Body of pancreas (tissue), 4 donors: ENCODE measurements at regions of chr19 and their contacts with region 1.

Region 1: DNA sequence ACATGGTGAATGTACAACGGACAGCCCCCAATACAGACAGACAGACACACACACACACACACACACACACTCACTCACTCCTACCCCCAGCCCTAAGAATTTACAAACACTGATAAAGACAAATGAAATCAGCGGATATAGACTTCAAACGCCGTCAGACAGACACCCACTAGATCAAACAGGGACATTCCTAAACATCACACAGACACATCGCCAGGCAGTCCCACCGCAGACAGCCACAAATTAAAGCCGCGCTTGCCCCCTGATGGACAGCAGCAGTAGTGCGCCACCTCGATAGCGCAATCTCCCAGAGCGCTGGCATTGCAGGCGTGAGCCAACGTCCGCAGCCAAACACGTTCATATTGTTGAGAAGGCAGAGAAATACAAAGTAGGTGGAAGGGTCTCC is 24.7 kb upstream of the ADGRE1 start:
- DNase-seq: peak; percentile 78 to 82 (median 80)
- ATAC-seq: peak; percentile 82
- H3K4me3 ChIP-seq: no peak overlapping the region
- H3K27ac ChIP-seq: peak overlapping the region in 1 of 4 donors; percentile 59
- H3K4me1 ChIP-seq: no peaks in the 10 kb centered on the region
- H3K27me3 ChIP-seq: no peaks in the 10 kb centered on the region
- CTCF ChIP-seq: peak; percentile 75 to 93 (median 81)
- POLR2A ChIP-seq: no peak

Region 2: DNA sequence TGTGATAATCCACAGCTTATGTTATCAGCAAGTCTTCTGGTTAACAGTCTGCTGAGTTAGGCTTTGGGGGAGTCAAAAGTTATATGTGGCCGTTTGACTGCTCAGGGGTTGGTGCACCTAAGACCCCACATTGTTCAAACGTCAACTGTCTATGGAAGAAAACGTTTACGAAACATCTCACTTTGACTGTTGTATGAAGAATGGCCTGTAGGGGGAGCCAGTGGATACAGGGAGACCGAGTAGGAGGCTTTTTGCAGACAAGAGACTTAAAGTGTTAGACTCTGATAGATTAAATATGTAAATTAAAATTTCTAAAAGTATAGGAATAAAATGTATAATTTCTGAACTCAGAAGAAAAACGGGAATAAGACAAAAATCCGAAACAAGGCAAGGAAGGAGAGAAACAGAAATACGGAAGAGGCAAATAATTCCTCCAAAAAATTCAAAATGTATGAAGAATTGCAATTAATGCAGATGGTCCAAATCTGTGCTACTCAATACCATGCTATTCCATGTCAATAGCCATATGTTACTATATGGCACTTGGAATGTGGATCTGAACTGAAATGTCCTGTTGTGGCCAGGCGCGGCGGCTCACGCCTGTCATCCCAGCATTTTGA is 230.6 kb before region 1 on chr19:
- intact Hi-C with region 1: loop called (anchors 10 kb)
- DNase-seq: peak; percentile 71 to 80 (median 77)
- ATAC-seq: peak; percentile 58
- H3K4me3 ChIP-seq: no peak overlapping the region
- H3K27ac ChIP-seq: no peak overlapping the region
- H3K4me1 ChIP-seq: peaks cover 3% of the 10 kb centered on the region
- H3K27me3 ChIP-seq: no peaks in the 10 kb centered on the region
- CTCF ChIP-seq: peak; percentile 76 to 82 (median 77)
- POLR2A ChIP-seq: no peak

Region 3: DNA sequence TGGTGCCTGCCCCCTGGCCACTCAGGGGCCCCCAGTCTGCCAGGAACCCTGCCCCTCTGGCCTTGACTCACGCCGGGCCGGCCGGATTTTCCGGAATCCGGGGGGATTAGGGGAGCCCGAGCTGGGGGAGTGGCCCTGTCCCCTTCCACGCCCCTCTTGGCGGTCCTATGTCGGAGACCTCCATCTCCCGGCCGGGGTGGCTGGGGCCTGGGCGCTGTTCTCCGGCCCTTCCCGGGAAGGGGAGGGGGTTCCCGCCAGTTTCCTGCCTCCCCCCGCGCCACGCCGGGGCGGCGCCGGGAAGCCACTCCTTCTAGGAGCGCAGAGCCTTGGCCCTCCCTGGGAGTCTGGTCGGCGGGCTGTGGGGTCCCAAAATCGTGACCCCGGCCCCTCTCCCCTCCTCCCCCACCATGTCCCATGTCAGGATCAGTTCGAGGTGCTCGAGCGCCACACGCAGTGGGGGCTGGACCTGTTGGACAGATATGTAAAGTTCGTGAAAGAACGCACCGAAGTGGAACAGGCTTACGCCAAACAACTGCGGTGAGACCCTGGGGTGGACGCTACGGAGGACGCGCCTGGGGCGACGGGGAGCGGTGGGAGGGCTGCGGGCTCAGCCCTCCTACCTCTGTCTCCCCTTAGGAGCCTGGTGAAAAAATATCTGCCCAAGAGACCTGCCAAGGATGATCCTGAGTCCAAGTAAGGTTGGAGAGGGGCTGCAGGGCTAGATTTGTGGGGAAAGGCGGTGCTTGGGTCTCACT is 121.9 kb before region 1 on chr19:
- intact Hi-C with region 1: loop called (anchors 10 kb)
- DNase-seq: peak; percentile 42 to 50 (median 49)
- ATAC-seq: no peak
- H3K4me3 ChIP-seq: peak overlapping the region; percentile 42 to 73
- H3K27ac ChIP-seq: peak overlapping the region; percentile 81 to 95 (median 88)
- H3K4me1 ChIP-seq: peaks cover 54% of the 10 kb centered on the region
- H3K27me3 ChIP-seq: no peaks in the 10 kb centered on the region
- CTCF ChIP-seq: no peak
- POLR2A ChIP-seq: peak in 1 of 3 donors; percentile 38

Region 4: GRCh38 chr19:6772028-6772865 is 90.4 kb before region 1 on chr19 and contains the start of gene VAV1:
- intact Hi-C with region 1: loop called (anchors 10 kb)
- DNase-seq: peak in 1 of 4 donors; percentile 65
- ATAC-seq: no peak
- H3K4me3 ChIP-seq: peak within 1 kb of the TSS in 1 of 2 donors; percentile 32
- H3K27ac ChIP-seq: peak within 1 kb of the TSS in 1 of 4 donors; percentile 50
- H3K4me1 ChIP-seq: peaks cover 9% of the 10 kb centered on the region
- H3K27me3 ChIP-seq: no peaks in the 10 kb centered on the region
- CTCF ChIP-seq: no peak
- POLR2A ChIP-seq: peak in 1 of 3 donors; percentile 47
- total RNA-seq, gene VAV1: 1.3 to 5.6 TPM